T-cell (primary cell): ENCODE measurements at regions of chr10 and their contacts with region 1.

Region 1: DNA sequence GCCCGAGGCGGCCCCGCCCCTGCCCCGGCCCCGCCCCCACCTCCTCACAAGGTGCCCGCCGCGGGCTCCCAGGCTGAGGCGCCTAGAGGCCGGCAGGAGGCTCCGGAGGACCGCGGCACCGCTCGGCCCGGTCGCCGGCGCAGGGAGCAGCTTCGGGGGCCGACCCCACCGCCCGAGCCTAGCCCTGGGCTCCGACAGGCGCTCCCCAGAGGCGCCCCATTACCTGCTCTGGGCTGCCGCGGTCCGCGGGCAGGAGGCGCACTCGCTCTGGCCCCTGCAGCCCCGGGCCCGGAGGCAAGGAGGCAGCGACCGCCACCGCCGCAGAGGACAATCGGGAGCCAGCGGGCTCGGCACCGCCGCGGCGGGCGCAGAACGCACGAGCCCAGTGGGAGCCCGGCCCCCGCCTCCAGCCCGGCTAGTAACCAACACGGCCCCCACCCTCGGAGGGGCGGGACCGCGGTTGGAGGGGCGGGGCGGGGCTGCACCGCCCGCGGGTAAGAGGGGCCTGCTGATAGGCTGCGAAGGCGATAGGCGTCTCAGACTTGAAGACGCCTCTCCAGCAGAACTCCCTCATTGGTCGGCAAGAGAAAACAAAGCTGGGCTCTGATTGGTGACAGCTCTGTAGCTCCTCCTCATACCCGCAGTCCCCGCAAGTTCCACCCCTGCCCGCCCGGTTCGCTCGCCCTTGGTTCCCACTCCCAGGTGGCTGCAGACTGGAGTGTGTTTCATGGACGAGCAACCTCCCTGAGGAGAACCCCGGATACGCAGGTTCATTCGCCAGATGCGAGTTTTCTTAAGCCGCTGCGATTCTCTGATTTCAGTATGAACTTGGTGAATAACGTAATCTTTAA is at the start of gene MPP7:
- DNase-seq: peak; percentile 92 to 98 (median 96)
- ATAC-seq: peak; percentile 90 to 93 (median 92)
- H3K4me3 ChIP-seq: peak within 1 kb of the TSS; percentile 67 to 83
- H3K4me3 Mint-ChIP-seq: peak within 1 kb of the TSS; percentile 85 to 92 (median 85)
- H3K27ac ChIP-seq: peak within 1 kb of the TSS; percentile 54
- H3K27ac Mint-ChIP-seq: peak within 1 kb of the TSS; percentile 88 to 95
- H3K4me1 ChIP-seq: peaks cover 7 to 16% of the 10 kb centered on the region in 2 experiments
- H3K4me1 Mint-ChIP-seq: peaks cover 60 to 80% (median 75%) of the 10 kb centered on the region in 3 donors
- H3K27me3 ChIP-seq: no peaks in the 10 kb centered on the region
- H3K27me3 Mint-ChIP-seq: no peaks in the 10 kb centered on the region
- total RNA-seq, gene MPP7: 22.8 to 35.8 (median 26.0) TPM

Region 2: DNA sequence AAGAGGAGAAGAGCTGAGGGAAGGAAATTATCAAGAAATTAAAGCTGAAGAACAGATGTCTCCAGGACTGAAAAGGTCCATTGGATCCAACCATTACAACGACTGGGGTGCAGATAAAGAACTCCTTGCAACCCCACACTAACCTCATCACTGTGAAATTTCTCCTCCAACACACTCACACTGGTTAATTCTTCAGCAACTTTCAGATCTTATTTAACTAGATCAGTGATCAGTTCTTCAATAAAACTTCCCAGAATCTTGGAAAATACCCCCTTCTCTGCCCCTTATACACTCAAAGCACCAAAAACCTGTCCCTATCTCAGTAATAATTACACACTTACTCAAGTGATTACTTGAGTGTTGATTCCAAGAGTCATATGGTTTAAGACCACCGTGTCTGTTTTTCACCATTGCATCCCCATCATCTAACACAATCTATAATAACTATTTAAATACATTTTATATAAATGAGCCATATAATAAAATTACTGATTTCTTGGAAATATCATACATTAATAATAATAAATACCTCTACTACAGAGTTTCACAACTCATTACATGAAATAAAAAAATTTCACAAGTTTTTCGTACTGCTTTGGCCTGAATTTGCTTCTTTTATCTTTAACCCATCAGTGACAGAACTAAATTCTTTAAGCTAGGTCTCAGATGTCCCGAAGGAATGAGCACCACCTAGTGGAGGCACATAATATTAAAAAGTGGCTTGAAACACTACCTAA is 123.7 kb before region 1 on chr10:
- CTCF ChIA-PET with region 1: interaction called in 1 of 2 experiments, 17 read pairs
- POLR2A ChIA-PET with region 1: interaction called in 1 of 2 experiments, 3 read pairs
- DNase-seq: peak in 13 of 35 experiments; percentile 6 to 77 (median 24)
- ATAC-seq: peak; percentile 53 to 69 (median 58)
- H3K4me3 ChIP-seq: no peak overlapping the region
- H3K4me3 Mint-ChIP-seq: peak overlapping the region; percentile 83 to 87 (median 84)
- H3K27ac ChIP-seq: peak overlapping the region; percentile 69
- H3K27ac Mint-ChIP-seq: peak overlapping the region; percentile 95
- H3K4me1 ChIP-seq: peaks cover 9 to 10% of the 10 kb centered on the region in 2 experiments
- H3K4me1 Mint-ChIP-seq: peaks cover 43 to 46% (median 46%) of the 10 kb centered on the region in 3 donors
- H3K27me3 ChIP-seq: no peaks in the 10 kb centered on the region
- H3K27me3 Mint-ChIP-seq: no peaks in the 10 kb centered on the region

Region 3: GRCh38 chr10:28250782-28251181 is 52.1 kb before region 1 on chr10:
- CTCF ChIA-PET with region 1: interaction called, 3 to 11 read pairs
- POLR2A ChIA-PET with region 1: interaction called in 1 of 2 experiments, 4 read pairs
- DNase-seq: peak in 1 of 35 experiments; percentile 50
- ATAC-seq: peak in 1 of 4 experiments; percentile 54
- H3K4me3 ChIP-seq: no peak overlapping the region
- H3K4me3 Mint-ChIP-seq: no peak overlapping the region
- H3K27ac ChIP-seq: no peak overlapping the region
- H3K27ac Mint-ChIP-seq: no peak overlapping the region
- H3K4me1 ChIP-seq: peaks cover 0 to 9% of the 10 kb centered on the region in 2 experiments
- H3K4me1 Mint-ChIP-seq: peaks cover 40 to 50% (median 43%) of the 10 kb centered on the region in 3 donors
- H3K27me3 ChIP-seq: no peaks in the 10 kb centered on the region
- H3K27me3 Mint-ChIP-seq: no peaks in the 10 kb centered on the region

Region 4: DNA sequence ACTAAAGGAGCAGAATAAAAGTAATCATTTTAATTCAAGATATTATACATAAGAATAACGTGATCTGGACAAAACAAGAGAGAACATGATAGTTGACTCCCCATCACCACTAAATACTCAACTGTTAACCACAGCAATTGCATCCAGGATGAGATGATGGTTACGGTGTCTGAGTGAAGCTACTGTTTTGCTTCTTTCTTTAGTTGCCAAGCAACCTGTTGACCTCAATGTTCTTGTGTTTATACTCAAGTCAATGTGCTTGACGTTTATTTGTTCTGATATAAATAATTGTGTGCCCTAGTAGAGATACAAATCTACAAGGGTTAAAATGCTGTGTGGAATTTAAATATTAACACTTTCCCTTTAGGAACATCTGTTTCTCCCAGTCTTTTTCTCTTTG is 31.4 kb after region 1 on chr10:
- CTCF ChIA-PET with region 1: interaction called, 6 to 91 read pairs
- POLR2A ChIA-PET with region 1: interaction called, 20 to 127 read pairs
- DNase-seq: peak in 29 of 35 experiments; percentile 3 to 95 (median 52)
- ATAC-seq: peak; percentile 69 to 78 (median 74)
- H3K4me3 ChIP-seq: peak overlapping the region; percentile 55 to 62
- H3K4me3 Mint-ChIP-seq: peak overlapping the region; percentile 91 to 92 (median 92)
- H3K27ac ChIP-seq: peak overlapping the region; percentile 97
- H3K27ac Mint-ChIP-seq: peak overlapping the region; percentile 99 to 100
- H3K4me1 ChIP-seq: peaks cover 33 to 61% of the 10 kb centered on the region in 2 experiments
- H3K4me1 Mint-ChIP-seq: peaks cover 64 to 84% (median 67%) of the 10 kb centered on the region in 3 donors
- H3K27me3 ChIP-seq: no peaks in the 10 kb centered on the region
- H3K27me3 Mint-ChIP-seq: no peaks in the 10 kb centered on the region

Region 5: DNA sequence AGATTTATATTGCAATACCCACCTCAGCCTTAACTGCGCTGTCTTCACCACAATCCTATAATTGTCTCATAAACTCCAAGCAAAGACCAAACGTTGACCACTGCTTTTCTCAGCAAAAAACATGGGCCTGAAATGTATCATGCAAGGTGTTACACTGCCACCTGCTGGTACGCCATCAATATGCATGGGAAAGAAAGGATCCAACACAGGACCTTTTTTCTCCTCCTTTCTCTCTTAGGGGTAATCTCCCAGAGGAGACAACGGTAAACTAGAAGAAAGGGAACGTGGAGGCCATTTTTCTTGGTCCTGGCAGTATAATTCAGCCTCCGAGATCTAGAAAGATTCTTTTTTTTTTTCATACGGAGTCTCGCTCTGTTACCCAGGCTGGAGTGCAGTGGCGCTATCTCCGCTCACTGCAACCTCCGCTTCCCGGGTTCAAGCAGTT is 79.1 kb after region 1 on chr10:
- CTCF ChIA-PET with region 1: interaction called, 29 to 111 read pairs
- POLR2A ChIA-PET with region 1: interaction called, 5 to 14 read pairs
- DNase-seq: peak; percentile 50 to 93 (median 78)
- ATAC-seq: peak; percentile 75 to 93 (median 82)
- H3K4me3 ChIP-seq: no peak overlapping the region
- H3K4me3 Mint-ChIP-seq: peak overlapping the region in 1 of 3 donors; percentile 2
- H3K27ac ChIP-seq: no peak overlapping the region
- H3K27ac Mint-ChIP-seq: peak overlapping the region; percentile 67 to 82
- H3K4me1 ChIP-seq: peaks cover 11 to 12% of the 10 kb centered on the region in 2 experiments
- H3K4me1 Mint-ChIP-seq: peaks cover 30 to 41% (median 32%) of the 10 kb centered on the region in 3 donors
- H3K27me3 ChIP-seq: peaks cover 0 to 3% of the 10 kb centered on the region in 2 experiments
- H3K27me3 Mint-ChIP-seq: peaks cover 0 to 5% of the 10 kb centered on the region in 2 donors

Region 6: DNA sequence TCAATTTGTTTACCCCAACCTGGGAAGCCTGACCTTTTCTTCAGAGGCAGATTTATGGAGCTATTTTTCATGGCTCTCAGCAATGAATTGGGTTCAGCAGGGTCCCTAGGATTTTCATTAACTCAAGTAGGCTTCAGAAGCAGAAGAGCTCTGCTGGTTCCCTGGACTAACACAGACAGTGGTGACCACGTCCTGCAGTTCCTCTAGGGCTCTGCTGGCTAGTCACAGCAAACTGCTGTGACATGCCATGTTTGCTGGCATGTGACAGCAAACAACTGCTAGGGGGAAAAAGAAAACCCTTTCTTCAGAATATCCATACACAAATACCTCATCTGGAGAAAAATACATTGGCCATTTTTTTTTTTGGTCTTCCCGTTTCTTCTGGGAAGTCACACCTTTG is 387.7 kb after region 1 on chr10:
- CTCF ChIA-PET with region 1: no interaction called
- POLR2A ChIA-PET with region 1: no interaction called
- DNase-seq: no peak
- ATAC-seq: no peak
- H3K4me3 ChIP-seq: no peak overlapping the region
- H3K4me3 Mint-ChIP-seq: no peak overlapping the region
- H3K27ac ChIP-seq: no peak overlapping the region
- H3K27ac Mint-ChIP-seq: no peak overlapping the region
- H3K4me1 ChIP-seq: no peaks in the 10 kb centered on the region
- H3K4me1 Mint-ChIP-seq: no peaks in the 10 kb centered on the region
- H3K27me3 ChIP-seq: peaks cover 0 to 18% of the 10 kb centered on the region in 2 experiments
- H3K27me3 Mint-ChIP-seq: peaks cover 28 to 40% of the 10 kb centered on the region in 2 donors